ENCODE measurements at regions of chr11 and their contacts with region 1.

Region 1: GRCh38 chr11:2511421-2512369 is 66.9 kb downstream of the KCNQ1 start:
- DNase-seq: peak; percentile 79

Region 2: GRCh38 chr11:2444821-2445745 is 66.6 kb before region 1 on chr11 and contains the start of gene KCNQ1:
- intact Hi-C with region 1: loop called (anchors 5 kb)
- DNase-seq: peak; percentile 78
- total RNA-seq, gene KCNQ1: 43.0 TPM

Region 3: GRCh38 chr11:2459796-2460531 is 51.7 kb before region 1 on chr11:
- intact Hi-C with region 1: loop called (anchors 2 kb)
- DNase-seq: peak; percentile 67

Region 4: GRCh38 chr11:2644844-2645778 is 133.4 kb after region 1 on chr11:
- intact Hi-C with region 1: no loop called
- DNase-seq: no peak

Region 5: DNA sequence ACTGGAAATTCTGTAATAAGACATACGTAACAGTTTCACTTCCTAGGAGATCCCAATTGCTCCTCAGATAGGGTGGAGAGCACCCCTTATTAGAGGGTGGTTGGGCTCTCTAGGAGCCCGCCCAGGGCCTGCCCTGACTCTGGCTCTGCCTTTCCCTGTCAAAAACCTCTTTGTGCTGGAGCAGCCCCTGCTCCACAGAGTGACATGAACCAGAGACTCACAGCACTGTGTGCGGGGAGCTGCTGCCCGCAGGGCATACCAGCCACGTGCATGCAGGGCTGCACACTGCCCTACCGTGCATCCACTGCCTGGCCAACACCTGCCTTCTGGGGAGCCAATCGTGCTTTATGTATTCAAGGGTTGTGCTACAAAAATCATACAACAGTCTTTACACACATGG is 163.8 kb after region 1 on chr11:
- intact Hi-C with region 1: no loop called
- DNase-seq: peak; percentile 63